ENCODE measurements at regions of chr7 and their contacts with region 1.

Region 1: DNA sequence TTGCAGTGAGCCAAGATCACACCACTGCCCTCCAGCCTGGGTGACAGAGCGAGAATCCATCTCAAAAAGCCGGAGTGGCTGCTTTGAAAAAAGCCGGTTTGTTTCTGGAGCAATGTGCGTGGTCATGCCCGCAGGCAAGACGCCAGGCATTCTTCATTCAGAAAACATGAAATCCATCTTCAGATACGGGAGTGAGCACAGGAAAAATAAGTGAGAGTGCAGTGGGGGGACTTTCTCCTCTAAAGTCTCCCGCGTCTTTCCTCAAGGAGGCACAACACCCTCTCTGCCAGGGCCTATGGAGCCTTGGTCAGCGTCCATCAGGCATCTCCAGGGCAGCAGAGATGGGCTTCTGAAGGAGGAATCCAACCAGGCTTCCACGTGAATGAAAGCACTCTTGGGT is 62.3 kb upstream of the DGKI start:
- DNase-seq: no peak
- ATAC-seq: no peak
- H3K4me3 ChIP-seq: no peak overlapping the region
- H3K27ac ChIP-seq: no peak overlapping the region
- H3K4me1 ChIP-seq: no peaks in the 10 kb centered on the region
- H3K27me3 ChIP-seq: no peaks in the 10 kb centered on the region
- CTCF ChIP-seq: no peak
- POLR2A ChIP-seq: no peak

Region 2: GRCh38 chr7:138008547-138009349 is 99.7 kb after region 1 on chr7:
- in situ Hi-C with region 1: loop called (anchors 5 kb)
- intact Hi-C with region 1: no loop called
- DNase-seq: peak in 1 of 2 donors; percentile 21
- ATAC-seq: peak; percentile 56 to 70
- H3K4me3 ChIP-seq: no peak overlapping the region
- H3K27ac ChIP-seq: no peak overlapping the region
- H3K4me1 ChIP-seq: no peaks in the 10 kb centered on the region
- H3K27me3 ChIP-seq: no peaks in the 10 kb centered on the region
- CTCF ChIP-seq: peak; percentile 84 to 92 (median 88)
- POLR2A ChIP-seq: no peak

Measured in gastrocnemius medialis (tissue), 4 donors.